ENCODE measurements at regions of chr3 and their contacts with region 1.

Region 1: GRCh38 chr3:39288300-39288808 is 8.5 kb upstream of the CX3CR1 start:
- DNase-seq: peak; percentile 78
- ATAC-seq: peak; percentile 94

Region 2: GRCh38 chr3:39126532-39127071 is 161.8 kb before region 1 on chr3:
- intact Hi-C with region 1: loop called (anchors 2 kb)
- DNase-seq: peak; percentile 62
- ATAC-seq: peak; percentile 82

Region 3: DNA sequence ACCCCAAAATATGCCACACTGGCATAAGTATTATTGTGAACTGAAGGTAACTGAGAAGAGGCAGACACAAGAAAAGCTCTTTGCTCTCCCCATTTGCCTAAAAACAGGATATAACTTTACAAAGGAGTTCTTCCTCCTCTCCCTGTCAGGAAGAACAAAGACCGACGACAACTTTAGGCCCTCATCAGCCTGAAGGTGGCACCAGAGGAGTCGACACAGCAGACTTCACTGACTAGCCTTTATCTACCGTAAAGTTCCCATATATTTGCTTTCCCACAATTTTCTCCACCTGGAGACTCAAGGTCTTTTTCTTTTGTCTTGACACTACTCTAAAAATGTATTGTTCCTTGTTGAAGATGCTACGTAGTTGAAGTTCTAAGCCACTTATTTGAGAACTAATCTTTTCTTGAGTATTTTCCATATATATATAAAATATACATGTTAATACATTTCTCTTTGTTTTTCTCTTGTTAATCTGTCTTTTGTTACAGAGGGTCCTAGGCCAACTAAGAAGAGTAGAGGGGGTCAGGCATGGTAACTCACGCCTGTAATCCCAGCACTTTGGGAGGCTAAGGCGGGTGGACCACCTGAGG is 79.8 kb before region 1 on chr3:
- intact Hi-C with region 1: loop called (anchors 5 kb)
- DNase-seq: peak; percentile 53
- ATAC-seq: peak; percentile 94

Region 4: DNA sequence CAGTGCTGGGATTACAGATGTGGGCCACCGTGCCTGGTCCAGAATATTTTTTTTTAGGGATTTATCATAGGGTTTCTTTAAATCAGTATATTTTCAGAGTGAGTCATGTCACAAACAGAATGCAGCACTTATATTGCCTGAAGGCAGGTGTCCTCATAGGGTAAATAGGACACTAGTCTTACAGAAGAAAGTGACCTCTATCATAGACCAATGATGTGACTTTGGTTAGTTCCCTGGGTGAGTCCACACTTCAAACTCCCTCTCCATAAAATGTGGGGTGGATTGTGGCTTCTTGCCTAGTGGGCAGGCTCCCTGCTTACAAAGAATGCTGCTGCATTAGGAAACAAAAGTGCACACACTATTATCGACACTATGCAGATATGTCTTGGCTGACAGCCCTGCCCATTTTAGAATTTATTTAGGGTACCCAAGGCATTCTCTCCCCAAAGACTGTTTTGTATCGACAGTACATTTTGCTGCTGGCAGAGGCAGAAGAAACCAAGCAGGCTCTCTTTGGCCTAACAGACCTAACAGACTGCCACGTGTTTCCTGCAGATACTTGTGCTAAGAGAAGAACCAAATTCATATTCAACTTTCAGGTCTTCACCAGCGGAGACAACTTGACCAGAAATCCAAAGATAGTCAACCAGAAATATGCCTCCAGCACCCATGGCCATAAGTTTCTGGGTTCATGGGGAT is 304.1 kb after region 1 on chr3:
- intact Hi-C with region 1: no loop called
- DNase-seq: no peak
- ATAC-seq: no peak